Vagina (tissue), 2 donors: ENCODE measurements at regions of chr3 and their contacts with region 1.

Region 1: GRCh38 chr3:71831599-71831998 is 46.7 kb upstream of the PROK2 start:
- DNase-seq: no peak
- H3K4me3 ChIP-seq: no peak overlapping the region
- H3K27ac ChIP-seq: no peak overlapping the region
- H3K4me1 ChIP-seq: no peaks in the 10 kb centered on the region
- H3K27me3 ChIP-seq: no peaks in the 10 kb centered on the region
- CTCF ChIP-seq: no peak
- POLR2A ChIP-seq: no peak

Region 2: DNA sequence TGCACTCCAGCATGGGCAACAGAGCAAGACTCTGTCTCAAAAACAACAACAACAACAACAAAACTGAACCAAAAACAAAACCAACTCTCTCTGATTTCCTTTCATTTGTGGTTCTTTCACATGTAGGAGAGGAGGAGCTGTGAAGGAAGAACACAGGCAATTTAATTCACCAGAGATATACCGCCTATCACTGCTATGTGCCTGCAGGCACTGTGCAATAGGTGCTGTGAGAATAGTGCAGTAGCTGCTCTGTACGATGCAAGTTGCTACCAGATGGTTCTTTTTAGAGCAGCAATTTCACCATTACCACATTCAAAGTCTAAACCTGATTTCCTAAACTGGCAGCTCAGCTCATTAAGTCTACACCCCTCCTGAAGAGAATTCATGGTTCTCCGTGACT is 35.3 kb before region 1 on chr3:
- intact Hi-C with region 1: loop called (anchors 1 kb)
- DNase-seq: no peak
- H3K4me3 ChIP-seq: no peak overlapping the region
- H3K27ac ChIP-seq: no peak overlapping the region
- H3K4me1 ChIP-seq: no peaks in the 10 kb centered on the region
- H3K27me3 ChIP-seq: no peaks in the 10 kb centered on the region
- CTCF ChIP-seq: no peak
- POLR2A ChIP-seq: no peak